ENCODE measurements at regions of chr22 and their contacts with region 1.

Region 1: DNA sequence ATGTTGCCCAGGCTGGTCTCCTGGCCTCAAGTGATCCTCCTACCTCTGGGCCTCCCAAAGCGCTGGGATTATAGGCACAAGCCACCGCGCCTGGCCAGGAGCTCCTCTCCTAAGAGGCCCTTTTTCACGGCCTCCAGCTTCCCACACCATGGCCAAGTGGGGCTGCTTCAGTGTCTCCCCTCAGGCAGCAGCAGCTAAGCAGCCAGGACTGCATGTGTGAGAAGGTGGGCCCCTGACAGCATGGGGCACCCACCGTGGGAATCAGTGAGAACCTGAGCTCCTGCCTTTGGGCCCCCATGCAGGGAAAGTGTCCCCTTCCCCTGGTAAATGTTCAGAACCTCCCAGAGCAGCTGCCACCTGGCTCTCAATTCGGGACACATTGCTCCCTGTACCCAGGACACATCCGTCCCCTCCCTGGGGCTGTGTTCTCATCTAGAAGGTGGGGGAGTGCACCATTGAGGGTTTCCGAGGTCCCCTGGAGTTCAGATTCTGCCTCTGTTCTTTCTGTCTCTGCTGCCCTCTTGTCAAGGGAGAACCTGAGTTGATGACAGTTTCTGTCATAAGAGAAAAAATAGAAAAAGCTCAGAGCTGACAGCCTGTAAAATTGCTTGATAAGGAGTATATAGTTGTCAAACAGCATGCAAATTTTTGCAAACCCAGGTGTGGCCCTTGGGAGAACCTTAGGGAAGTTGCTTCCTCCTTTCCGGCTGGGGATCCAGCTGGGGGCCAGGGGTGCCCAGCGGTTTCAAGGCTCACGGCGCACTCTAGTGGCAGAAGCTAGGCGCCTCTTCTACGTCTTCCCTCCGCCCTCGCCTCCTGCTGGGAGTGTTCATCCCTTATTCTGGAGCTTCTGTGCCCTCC is 29.7 kb downstream of the FAM83F start:
- H3K4me3 ChIP-seq: no peak overlapping the region
- H3K27ac ChIP-seq: no peak overlapping the region
- H3K4me1 ChIP-seq: no peaks in the 10 kb centered on the region
- CTCF ChIP-seq: peak; percentile 95

Region 2: DNA sequence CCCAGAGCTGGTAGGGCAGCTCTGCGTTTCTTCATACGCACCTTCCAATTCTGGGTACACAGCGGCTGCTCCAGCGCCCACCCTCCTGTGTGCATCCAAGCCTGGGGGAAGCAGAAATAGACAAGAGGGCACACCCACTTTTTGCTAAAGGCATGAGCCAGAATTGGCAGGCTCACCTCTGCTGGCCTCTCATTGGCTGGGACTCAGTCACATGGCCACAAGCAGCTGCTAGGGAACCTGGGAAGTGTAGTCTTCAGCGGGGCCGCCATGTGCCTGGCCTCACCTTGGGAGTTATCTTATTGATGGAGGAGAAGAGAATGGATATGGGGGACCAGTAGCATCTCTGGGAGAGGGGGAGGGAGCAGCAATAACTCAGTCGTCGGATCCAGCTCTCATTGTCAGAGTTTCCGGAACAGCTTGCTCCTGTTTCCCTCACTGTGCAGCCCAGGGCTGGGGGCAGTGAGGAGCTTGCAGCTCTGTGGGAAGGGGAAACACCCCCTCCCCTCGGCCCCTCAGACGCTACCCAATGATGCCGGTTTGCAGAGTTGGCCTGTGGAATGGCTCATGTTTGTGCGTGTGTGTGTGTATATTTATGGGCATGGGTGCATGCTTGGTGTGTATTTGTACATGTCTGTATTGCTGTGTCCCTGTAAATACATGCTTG is 534.2 kb before region 1 on chr22:
- CTCF ChIA-PET with region 1: interaction called, 12 read pairs
- POLR2A ChIA-PET with region 1: no interaction called
- H3K4me3 ChIP-seq: no peak overlapping the region
- H3K27ac ChIP-seq: no peak overlapping the region
- H3K4me1 ChIP-seq: no peaks in the 10 kb centered on the region
- CTCF ChIP-seq: no peak

Region 3: DNA sequence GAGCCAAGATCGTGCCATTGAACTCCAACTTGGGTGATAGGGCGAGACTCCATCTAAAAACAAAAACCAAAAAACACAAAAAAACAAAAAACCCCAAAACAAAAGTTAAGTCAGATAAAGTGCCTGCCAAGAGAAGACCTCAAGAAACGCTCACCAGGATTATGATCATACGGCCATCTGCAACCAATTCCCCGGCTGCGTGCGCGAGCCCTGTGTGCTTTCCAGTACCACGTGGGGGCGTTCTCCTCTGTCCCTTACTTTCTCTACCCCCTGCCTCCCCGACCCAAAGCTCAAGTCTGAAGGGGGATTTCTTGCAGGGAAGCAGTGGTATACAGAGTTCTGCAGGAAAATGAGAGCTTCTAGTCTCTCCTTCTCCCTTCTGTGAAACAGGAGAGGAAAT is 481.3 kb before region 1 on chr22:
- CTCF ChIA-PET with region 1: interaction called, 18 read pairs
- POLR2A ChIA-PET with region 1: interaction called, 5 read pairs
- H3K4me3 ChIP-seq: no peak overlapping the region
- H3K27ac ChIP-seq: no peak overlapping the region
- H3K4me1 ChIP-seq: no peaks in the 10 kb centered on the region
- CTCF ChIP-seq: 0 out of 2 replicates have a peak, but pooled peaks have one; percentile 13

Region 4: DNA sequence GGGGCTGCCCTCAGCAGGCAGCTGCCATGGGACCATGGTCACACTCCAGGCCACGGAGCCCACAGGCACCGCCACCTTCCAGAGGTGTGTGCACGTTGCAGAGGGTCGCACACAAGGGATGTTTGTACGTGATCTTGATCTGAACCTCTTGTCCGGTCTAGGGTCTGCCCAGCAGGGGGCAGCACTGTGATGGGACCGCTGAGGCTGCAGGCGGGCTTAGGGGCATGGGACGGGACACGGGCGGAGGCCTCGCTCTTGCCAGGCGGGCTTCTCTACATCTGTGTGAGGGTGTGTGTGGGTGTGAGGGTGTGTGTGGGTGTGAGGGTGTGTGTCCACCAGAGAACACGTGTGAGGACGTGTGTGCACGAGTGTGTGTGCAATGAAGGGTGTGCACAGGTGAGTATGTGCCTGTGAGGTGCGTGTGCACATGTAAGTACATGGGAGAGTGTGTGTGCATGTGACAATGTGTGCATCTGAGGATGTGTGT is 401.5 kb before region 1 on chr22:
- CTCF ChIA-PET with region 1: interaction called, 20 read pairs
- POLR2A ChIA-PET with region 1: no interaction called
- H3K4me3 ChIP-seq: no peak overlapping the region
- H3K27ac ChIP-seq: no peak overlapping the region
- H3K4me1 ChIP-seq: no peaks in the 10 kb centered on the region
- CTCF ChIP-seq: peak; percentile 76; the same call in 1 of the 2 replicates

Region 5: DNA sequence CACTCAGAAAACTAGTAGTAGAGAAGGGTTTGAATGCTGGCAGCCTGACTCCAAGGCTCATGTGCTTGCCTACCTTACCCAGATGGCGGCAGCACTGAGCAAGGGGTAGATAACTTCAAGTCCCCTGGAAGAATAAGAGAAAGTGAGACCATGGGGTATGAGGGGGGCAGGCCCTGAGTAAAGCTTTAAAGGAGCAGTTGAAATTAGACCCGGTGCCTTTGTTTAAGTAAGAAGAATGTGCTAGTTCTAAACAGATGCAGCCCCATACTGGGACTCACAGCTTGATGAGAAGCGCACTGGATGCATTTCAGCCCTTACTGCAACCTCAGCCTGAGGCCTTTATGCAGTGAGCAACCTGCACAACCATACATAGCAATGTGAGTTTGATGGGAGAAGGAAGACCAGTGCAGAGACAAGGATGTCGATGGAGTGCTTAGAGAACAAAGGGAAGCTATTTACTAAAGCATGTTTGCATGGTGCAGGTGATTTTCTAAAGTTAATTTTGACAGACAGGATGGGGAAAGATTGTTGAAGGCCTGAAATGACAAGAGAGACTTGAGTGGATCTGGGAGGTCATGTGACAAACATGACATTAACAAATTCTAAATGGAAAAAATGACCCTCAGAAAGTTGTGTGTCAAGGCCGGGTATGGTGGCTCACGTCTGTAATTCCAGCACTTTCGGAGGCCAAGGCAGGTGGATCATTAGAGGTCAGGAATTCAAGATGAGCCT is 91.3 kb before region 1 on chr22:
- CTCF ChIA-PET with region 1: interaction called, 36 read pairs
- POLR2A ChIA-PET with region 1: no interaction called
- H3K4me3 ChIP-seq: no peak overlapping the region
- H3K27ac ChIP-seq: no peak overlapping the region
- H3K4me1 ChIP-seq: no peaks in the 10 kb centered on the region
- CTCF ChIP-seq: peak; percentile 37; the same call in 1 of the 2 replicates

Region 6: DNA sequence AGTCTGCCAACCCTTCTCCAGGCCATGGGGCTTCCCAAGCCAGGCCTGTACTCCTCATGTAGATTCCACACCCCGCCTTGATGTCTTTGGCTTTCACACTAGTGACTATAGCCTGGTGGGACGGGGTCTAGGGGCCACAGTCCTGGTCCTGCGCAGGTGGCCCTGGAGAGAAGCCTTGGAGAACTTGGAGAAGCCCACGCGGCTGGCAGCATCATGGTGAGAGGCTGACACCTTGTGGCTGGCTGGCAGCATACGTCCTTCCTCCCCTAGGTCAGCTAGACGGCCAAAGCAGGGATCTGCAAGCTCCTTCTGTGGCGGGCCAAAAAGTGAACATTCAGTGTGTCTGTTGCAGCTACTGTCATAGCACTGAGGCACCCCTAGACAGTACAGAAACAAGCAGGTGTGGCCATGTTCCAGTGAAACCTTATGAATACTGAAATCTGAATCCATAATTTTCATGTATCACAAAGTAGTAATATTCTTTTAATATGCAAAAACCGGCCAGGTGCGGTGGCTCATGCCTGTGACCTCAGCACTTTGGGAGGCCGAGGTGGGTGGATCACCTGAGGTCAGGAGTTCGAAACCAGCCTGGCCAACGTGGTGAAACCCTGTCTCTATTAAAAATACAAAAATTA is 12.3 kb after region 1 on chr22:
- CTCF ChIA-PET with region 1: interaction called, 58 read pairs
- POLR2A ChIA-PET with region 1: no interaction called
- H3K4me3 ChIP-seq: no peak overlapping the region
- H3K27ac ChIP-seq: no peak overlapping the region
- H3K4me1 ChIP-seq: peaks cover 16% of the 10 kb centered on the region
- CTCF ChIP-seq: peak; percentile 83

Region 7: DNA sequence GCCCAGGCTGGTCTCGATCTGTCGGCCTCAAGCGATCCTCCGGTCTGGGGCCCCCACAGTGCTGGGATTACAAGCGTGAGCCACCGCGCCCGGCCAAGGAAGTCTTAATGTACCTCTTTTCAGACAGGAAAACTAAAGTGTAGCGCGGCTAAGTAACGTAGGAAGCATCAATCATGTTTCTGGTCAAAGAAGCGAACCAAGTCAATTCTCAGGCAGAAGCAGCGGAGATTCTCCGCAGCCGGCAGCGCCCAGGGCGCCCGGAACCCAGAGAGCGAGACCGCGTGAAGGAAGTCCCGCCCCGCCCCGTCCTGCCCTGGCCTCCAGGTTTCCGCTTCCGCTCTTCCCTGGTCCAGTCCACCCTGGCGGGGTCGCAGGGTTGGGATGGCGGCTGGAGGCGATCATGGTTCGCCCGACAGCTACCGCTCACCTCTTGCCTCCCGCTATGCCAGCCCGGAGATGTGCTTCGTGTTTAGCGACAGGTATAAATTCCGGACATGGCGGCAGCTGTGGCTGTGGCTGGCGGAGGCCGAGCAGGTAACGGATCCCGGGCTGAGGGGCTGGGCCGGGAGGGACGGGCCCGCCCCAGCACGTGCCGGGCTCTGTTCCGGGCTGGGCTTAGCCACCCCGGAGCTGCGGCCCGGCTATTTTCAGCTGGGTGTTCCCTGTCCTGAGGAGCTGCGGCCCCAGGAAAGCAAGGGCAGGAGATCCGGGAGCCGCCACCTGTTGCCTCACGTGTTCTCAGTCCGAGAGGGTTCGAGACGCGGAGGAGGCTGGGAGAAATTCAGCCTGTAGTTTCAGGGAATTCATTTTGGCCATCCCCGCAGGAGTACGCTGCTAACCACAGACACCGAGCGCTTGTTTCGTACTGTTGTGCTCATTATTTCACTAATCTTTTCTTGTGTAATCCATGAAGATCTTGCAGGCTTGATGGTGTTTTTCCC is 322.0 kb after region 1 on chr22 and contains the start of gene ADSL:
- CTCF ChIA-PET with region 1: interaction called, 15 read pairs
- POLR2A ChIA-PET with region 1: no interaction called
- H3K4me3 ChIP-seq: peak within 1 kb of the TSS; percentile 92
- H3K27ac ChIP-seq: peak within 1 kb of the TSS; percentile 92
- H3K4me1 ChIP-seq: peaks cover 5% of the 10 kb centered on the region; the same call in 1 of the 2 replicates
- CTCF ChIP-seq: peak; percentile 57; the same call in 1 of the 2 replicates

Measured in HEK293 (cell line).